Tibial artery (tissue), 4 donors: ENCODE measurements at regions of chr12 and their contacts with region 1.

Region 1: DNA sequence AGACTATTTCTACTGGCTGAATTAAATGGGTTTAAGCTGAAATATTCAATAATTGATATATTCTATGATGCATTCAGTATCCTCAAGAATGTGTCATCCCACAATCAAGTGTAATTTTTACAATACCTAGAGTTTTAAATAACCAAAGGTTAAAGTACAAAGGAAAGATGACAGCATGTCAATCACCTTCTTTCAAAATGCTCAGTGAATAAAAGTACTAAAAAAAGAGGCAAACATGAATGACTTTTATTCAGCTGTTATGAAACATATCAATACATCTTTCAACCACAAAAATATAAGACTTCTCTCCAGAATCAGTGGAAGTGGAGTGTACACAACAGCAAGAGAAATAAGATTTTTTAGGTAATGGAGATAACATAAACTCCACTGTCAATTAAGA is 72.0 kb downstream of the NELL2 start:
- DNase-seq: no peak
- H3K4me3 ChIP-seq: no peak overlapping the region
- H3K27ac ChIP-seq: no peak overlapping the region
- H3K4me1 ChIP-seq: no peaks in the 10 kb centered on the region
- H3K27me3 ChIP-seq: no peaks in the 10 kb centered on the region
- CTCF ChIP-seq: no peak

Region 2: DNA sequence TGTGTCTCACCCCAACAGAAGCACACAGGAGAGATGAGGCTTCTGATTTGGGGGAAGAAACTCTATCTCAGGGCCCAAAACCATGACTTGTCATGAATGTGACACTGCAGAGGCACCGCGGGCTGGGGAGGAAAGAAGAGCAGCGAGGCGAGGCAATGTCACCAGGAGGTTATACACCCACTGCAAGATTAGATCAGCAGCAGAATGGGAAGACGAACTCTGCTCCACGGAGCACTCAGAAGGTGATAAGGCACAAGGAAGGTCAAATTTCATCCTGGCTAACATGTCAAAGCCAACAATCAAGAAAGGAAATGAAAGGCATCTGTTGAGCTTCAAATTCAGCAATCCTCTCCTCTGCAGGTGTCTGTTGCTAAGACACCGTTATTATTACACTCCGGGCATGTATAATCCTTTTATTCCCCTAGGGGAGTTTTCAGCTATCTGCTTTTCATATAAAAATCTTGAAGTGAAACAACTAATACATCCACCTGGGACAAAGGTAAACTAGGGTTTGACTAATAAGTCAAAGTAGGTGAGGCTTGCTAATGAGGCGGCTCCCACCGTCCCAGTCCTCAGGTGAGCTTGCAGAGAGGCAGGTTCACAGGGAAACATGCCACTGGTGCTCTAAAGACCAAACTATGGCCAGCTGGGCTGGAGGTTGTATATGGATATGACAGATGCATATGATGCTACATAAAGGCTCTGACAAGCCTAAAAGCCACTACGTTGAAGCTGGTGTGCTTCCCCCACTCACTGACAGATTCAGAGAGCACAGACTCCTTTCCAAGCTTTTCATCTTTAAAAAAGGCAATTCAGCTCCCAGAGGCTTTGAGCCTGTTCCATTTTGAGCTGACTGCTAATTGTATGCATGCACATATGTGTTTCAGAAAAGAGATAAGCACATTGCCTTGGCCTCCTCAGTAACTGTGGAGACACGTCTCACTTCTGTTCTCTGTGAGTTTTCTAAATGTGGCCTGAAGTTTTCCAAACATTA is 149.1 kb before region 1 on chr12:
- intact Hi-C with region 1: no loop called
- DNase-seq: no peak
- H3K4me3 ChIP-seq: no peak overlapping the region
- H3K27ac ChIP-seq: no peak overlapping the region
- H3K4me1 ChIP-seq: no peaks in the 10 kb centered on the region
- H3K27me3 ChIP-seq: no peaks in the 10 kb centered on the region
- CTCF ChIP-seq: no peak

Region 3: DNA sequence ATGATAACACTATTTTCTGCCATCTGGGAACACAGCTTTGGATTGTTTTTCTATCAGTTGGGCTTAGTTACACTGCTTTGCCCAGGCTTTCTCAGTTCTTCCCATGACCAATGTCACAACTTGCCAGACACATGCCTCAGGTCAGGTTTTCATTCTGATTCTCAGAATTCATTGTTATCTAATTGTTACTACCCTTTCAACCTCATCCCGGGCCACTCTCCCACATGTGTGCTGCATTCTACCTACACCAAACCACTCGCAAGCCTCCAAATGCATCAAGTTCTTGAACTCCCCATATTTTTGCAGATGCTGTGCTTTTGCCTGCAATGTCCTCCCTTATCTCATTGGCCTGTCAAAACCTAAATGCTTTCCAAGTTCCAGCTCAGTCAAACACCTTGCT is 35.7 kb after region 1 on chr12:
- intact Hi-C with region 1: loop called (anchors 1 kb)
- DNase-seq: no peak
- H3K4me3 ChIP-seq: no peak overlapping the region
- H3K27ac ChIP-seq: no peak overlapping the region
- H3K4me1 ChIP-seq: no peaks in the 10 kb centered on the region
- H3K27me3 ChIP-seq: no peaks in the 10 kb centered on the region
- CTCF ChIP-seq: no peak